GM10248 (cell line): ENCODE measurements at regions of chr5 and their contacts with region 1.

Region 1: GRCh38 chr5:129094087-129094923 is at the start of gene ISOC1:
- DNase-seq: peak; percentile 93
- CTCF ChIP-seq: no peak

Region 2: GRCh38 chr5:129104910-129105455 is 10.7 kb after region 1 on chr5:
- CTCF ChIA-PET with region 1: interaction called, 13 read pairs
- POLR2A ChIA-PET with region 1: no interaction called
- DNase-seq: no peak
- CTCF ChIP-seq: no peak

Region 3: DNA sequence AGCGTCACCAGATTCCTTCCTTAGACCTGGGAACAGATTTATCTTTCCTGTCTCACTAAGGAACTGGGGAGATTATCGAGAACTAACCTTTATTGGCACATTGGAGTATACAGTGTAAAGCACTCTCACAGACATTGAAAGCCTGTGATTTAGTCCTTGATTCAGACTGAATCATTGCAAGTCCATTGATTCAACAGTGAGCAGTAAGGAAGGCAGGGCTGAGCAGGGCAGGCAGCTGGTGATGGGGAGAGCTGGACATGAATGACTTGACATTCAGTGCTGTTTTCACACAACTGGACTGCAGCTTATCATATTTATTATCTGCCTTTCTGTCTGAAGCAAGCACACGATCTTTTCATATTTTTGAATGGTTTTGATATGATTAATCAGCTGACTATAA is 16.4 kb after region 1 on chr5:
- CTCF ChIA-PET with region 1: interaction called, 16 read pairs
- POLR2A ChIA-PET with region 1: no interaction called
- DNase-seq: no peak
- CTCF ChIP-seq: no peak

Region 4: GRCh38 chr5:129120158-129120581 is 25.9 kb after region 1 on chr5:
- CTCF ChIA-PET with region 1: interaction called, 66 read pairs
- POLR2A ChIA-PET with region 1: interaction called, 3 read pairs
- DNase-seq: no peak
- CTCF ChIP-seq: no peak

Region 5: GRCh38 chr5:129125810-129126209 is 31.5 kb after region 1 on chr5:
- CTCF ChIA-PET with region 1: interaction called, 66 read pairs
- POLR2A ChIA-PET with region 1: interaction called, 5 read pairs
- DNase-seq: peak; percentile 25
- CTCF ChIP-seq: no peak